Transverse colon (tissue), 4 donors: ENCODE measurements at regions of chr19 and their contacts with region 1.

Region 1: GRCh38 chr19:49487277-49488045 is at the start of gene RPL13A:
- DNase-seq: peak; percentile 100
- H3K4me3 ChIP-seq: peak within 1 kb of the TSS; percentile 67 to 98 (median 92)
- H3K27ac ChIP-seq: peak within 1 kb of the TSS; percentile 93 to 97 (median 94)
- H3K4me1 ChIP-seq: peaks cover 18 to 30% (median 24%) of the 10 kb centered on the region in 4 donors
- H3K27me3 ChIP-seq: no peaks in the 10 kb centered on the region
- CTCF ChIP-seq: no peak
- EP300 ChIP-seq: no peak
- POLR2A ChIP-seq: peak; percentile 100
- total RNA-seq, gene RPL13A: 1,219 to 2,956 (median 2,884) TPM

Region 2: GRCh38 chr19:49374665-49375434 is 112.6 kb before region 1 on chr19:
- in situ Hi-C with region 1: no loop called
- intact Hi-C with region 1: no loop called
- DNase-seq: no peak
- H3K4me3 ChIP-seq: no peak overlapping the region
- H3K27ac ChIP-seq: no peak overlapping the region
- H3K4me1 ChIP-seq: no peaks in the 10 kb centered on the region
- H3K27me3 ChIP-seq: no peaks in the 10 kb centered on the region
- CTCF ChIP-seq: no peak
- EP300 ChIP-seq: no peak
- POLR2A ChIP-seq: no peak

Region 3: DNA sequence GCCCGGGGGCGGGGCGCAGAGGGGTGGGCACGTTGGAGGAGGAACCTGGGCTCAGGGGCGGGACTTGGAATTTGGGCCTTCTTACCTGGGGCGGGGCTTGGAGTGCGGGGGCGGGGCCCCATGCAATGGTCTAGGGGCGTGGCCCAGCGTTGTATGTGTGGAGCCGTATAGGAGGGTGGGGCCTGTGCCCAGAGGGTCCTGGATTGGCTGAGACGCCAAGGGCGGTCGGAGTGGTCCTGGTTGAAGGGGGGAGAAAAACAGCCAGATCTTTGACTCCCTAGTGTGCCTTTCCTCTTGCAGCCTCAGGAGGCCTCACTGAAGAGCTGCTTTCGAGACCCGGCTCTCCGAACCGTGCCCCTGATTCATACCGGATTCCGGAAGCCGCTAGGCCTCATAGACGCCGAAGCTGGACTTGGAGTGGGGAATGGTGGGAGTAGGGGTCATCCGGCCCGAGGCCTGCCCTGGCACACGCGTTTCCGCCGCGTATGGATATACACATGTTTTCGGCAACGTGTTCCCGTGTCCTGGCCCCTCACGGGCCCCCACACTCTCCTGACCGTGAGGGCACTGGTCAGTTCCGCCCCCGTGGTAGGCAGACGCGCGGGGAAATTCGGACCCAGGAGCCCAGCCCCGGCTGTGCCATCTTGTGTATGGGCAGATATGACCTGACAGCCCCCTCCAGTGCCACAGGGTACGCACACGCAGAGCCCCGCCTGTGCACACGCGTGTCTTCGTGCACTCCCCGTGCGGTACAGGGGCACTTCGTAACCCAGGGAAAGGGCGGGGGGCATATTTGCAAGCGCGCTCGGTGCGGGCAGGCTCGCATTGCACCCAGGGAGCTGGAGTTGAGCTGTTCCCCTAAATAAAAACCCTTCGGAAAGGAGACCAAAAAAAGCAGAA is 102.9 kb after region 1 on chr19:
- in situ Hi-C with region 1: no loop called
- intact Hi-C with region 1: no loop called
- DNase-seq: peak; percentile 98
- H3K4me3 ChIP-seq: peak overlapping the region; percentile 68 to 88 (median 78)
- H3K27ac ChIP-seq: peak overlapping the region; percentile 92 to 97 (median 93)
- H3K4me1 ChIP-seq: peaks cover 17 to 32% (median 22%) of the 10 kb centered on the region in 4 donors
- H3K27me3 ChIP-seq: no peaks in the 10 kb centered on the region
- CTCF ChIP-seq: peak in 2 of 5 experiments; percentile 20 to 33
- EP300 ChIP-seq: no peak
- POLR2A ChIP-seq: peak; percentile 85

Region 4: DNA sequence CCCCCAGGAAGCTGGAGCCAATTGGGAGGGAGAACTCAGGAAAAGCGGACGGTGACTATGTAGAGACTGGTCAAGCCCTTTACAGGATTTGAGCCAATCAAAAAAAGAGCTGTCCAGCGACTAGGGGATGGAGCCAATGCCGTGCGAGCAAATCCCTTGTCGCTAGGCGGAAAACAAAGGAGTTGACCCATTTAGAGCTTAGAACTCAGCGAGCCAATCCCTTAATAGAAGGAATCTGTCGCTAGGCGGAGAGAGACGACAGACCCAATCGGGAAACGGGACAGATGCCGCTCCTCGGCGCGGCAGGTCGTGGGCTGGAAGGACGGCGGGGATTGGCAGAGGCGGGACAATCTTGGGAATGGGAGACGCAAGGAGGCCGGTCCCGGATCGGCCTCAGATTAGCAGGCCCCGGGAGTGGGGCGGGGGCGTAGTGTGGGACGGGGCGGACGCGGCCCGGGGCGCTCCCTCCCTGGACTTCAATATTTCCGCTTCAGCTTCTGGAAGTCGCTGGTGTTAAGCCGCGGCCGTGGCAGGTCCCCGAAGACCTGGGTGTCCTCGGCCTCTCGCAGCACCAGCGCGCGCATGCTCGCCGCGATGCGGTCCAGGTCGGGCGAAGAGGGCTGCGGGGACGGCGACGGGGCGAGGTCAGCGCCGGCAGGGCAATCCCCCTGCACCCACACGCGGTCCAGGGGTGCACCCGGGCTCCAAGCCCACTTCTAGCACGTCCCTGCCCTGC is 382.1 kb after region 1 on chr19:
- in situ Hi-C with region 1: loop called in 1 of 4 experiments (anchors 25 kb)
- intact Hi-C with region 1: no loop called
- DNase-seq: peak; percentile 97
- H3K4me3 ChIP-seq: peak overlapping the region; percentile 33 to 62 (median 53)
- H3K27ac ChIP-seq: peak overlapping the region; percentile 90 to 96 (median 94)
- H3K4me1 ChIP-seq: peaks cover 25 to 50% (median 43%) of the 10 kb centered on the region in 4 donors
- H3K27me3 ChIP-seq: no peaks in the 10 kb centered on the region
- CTCF ChIP-seq: peak in 1 of 5 experiments; percentile 45
- EP300 ChIP-seq: no peak
- POLR2A ChIP-seq: peak; percentile 79